Activated naive CD4-positive, alpha-beta T cell treated with anti-CD3 and anti-CD28 coated beads, Interleukin-2, amount 10 ng/mL, durations not matched to agents 7 days and 5 days (primary cell): ENCODE measurements at regions of chr6 and their contacts with region 1.

Region 1: GRCh38 chr6:106979427-106979884 is 4.9 kb upstream of the CD24 start:
- DNase-seq: peak; percentile 86
- H3K4me3 Mint-ChIP-seq: no peak overlapping the region
- H3K27ac Mint-ChIP-seq: no peak overlapping the region
- H3K4me1 Mint-ChIP-seq: peaks cover 4% of the 10 kb centered on the region
- H3K27me3 Mint-ChIP-seq: peaks cover 48% of the 10 kb centered on the region

Region 2: GRCh38 chr6:106608062-106608668 is 371.3 kb before region 1 on chr6:
- CTCF ChIA-PET with region 1: interaction called, 18 read pairs
- DNase-seq: peak; percentile 35
- H3K4me3 Mint-ChIP-seq: no peak overlapping the region
- H3K27ac Mint-ChIP-seq: no peak overlapping the region
- H3K4me1 Mint-ChIP-seq: peaks cover 10% of the 10 kb centered on the region
- H3K27me3 Mint-ChIP-seq: no peaks in the 10 kb centered on the region